ENCODE measurements at regions of chr14 and their contacts with region 1.

Region 1: GRCh38 chr14:21780429-21781084 is 106.9 kb upstream of the OR4E1 start:
- DNase-seq: peak; percentile 76

Region 2: GRCh38 chr14:21723431-21724045 is 57.0 kb before region 1 on chr14:
- intact Hi-C with region 1: no loop called
- DNase-seq: no peak

Region 3: DNA sequence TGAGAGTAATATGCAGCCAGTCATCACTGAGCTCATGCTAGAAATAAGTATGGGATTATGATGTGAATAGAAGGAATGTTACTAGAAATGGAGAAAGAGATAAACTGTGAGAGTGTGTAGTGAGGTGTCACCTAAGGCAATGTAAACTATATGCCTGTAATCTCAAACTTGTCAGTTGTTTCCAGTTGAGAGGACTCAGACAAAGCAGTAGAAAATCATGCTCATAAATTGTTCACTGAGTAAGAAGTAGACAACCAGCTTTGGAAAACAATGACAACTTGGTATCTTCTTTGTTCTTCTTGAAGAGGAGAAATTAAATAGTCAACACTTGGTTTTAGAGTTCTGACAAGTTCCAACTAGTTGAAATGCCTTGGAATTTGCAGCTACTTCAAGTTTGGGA is 41.6 kb after region 1 on chr14:
- intact Hi-C with region 1: loop called in 1 of 2 experiments (anchors 1 kb)
- DNase-seq: no peak

Region 4: GRCh38 chr14:22448905-22449599 is 668.5 kb after region 1 on chr14:
- intact Hi-C with region 1: no loop called
- DNase-seq: no peak

Measured in posterior vena cava (tissue), 2 donors.